Upper lobe of right lung (tissue), 1 donor: ENCODE measurements at regions of chr3 and their contacts with region 1.

Region 1: DNA sequence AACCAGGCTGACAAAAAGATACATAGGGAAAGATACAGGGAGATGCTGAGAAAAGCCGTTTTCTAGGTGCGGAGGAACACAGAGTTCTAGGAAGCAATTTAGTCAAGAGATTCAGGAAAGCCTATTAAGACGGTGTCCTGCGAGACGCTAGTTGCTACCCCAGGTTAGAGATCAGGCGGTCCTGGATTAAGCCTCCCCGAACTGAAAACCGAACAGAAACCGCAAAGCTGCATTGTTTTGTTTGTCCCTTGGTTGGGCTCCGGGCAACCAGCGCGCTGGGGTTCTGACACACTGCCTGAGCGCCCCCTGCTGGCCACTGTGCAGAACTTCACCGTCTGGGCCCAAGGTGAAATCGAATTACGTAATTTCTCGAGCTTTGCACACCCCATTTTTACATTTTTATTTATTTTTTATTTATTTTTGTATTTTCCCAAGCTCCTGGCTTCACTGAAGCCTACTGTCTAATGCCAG is 37.3 kb upstream of the NDUFB4 start:
- DNase-seq: peak; percentile 92
- ATAC-seq: peak; percentile 93
- H3K4me3 ChIP-seq: peak overlapping the region; percentile 46
- H3K27ac ChIP-seq: peak overlapping the region; percentile 86
- H3K4me1 ChIP-seq: peaks cover 14% of the 10 kb centered on the region
- H3K27me3 ChIP-seq: no peaks in the 10 kb centered on the region
- CTCF ChIP-seq: peak; percentile 99

Region 2: GRCh38 chr3:120245386-120245785 is 313.4 kb before region 1 on chr3:
- intact Hi-C with region 1: loop called (anchors 10 kb)
- DNase-seq: no peak
- ATAC-seq: no peak
- H3K4me3 ChIP-seq: no peak overlapping the region
- H3K27ac ChIP-seq: no peak overlapping the region
- H3K4me1 ChIP-seq: no peaks in the 10 kb centered on the region
- H3K27me3 ChIP-seq: no peaks in the 10 kb centered on the region
- CTCF ChIP-seq: no peak

Region 3: GRCh38 chr3:120449701-120450599 is 108.9 kb before region 1 on chr3:
- intact Hi-C with region 1: loop called (anchors 10 kb)
- DNase-seq: peak; percentile 69
- ATAC-seq: peak; percentile 53
- H3K4me3 ChIP-seq: peak overlapping the region; percentile 74
- H3K27ac ChIP-seq: peak overlapping the region; percentile 88
- H3K4me1 ChIP-seq: peaks cover 11% of the 10 kb centered on the region
- H3K27me3 ChIP-seq: peaks cover 8% of the 10 kb centered on the region
- CTCF ChIP-seq: no peak